RWPE1 (cell line): ENCODE measurements at regions of chr19 and their contacts with region 1.

Region 1: GRCh38 chr19:44260363-44261070 is 831 bp downstream of the ZNF233 start:
- DNase-seq: no peak
- H3K27ac ChIP-seq: peak overlapping the region; percentile 58
- CTCF ChIP-seq: no peak

Region 2: DNA sequence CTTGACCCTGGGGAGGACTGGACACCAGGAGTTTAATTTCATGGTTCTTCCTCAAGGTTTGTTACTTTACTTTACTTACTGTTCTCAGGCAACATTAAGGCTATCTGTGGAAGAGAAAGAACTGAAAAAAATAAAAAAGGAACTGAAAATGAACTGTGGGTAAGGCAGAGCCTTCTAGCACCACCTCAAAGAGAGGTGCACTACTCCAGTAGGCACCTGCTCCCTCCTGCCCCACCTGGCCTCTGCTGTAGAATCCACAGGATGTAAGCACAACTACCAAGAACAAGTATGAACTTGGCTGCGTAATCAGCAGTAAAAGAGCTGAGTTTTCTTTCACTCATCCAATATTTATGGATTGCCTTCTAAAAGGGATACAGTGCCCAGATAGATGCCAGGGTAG is 83.7 kb after region 1 on chr19:
- CTCF ChIA-PET with region 1: no interaction called
- POLR2A ChIA-PET with region 1: no interaction called
- DNase-seq: no peak
- H3K27ac ChIP-seq: no peak overlapping the region
- CTCF ChIP-seq: no peak

Region 3: GRCh38 chr19:44435481-44435880 is 175.0 kb after region 1 on chr19:
- CTCF ChIA-PET with region 1: interaction called, 10 read pairs
- POLR2A ChIA-PET with region 1: no interaction called
- DNase-seq: no peak
- H3K27ac ChIP-seq: no peak overlapping the region
- CTCF ChIP-seq: no peak